Heart left ventricle (tissue), 16 donors: ENCODE measurements at regions of chr18 and their contacts with region 1.

Region 1: GRCh38 chr18:55322178-55322735 is 265.7 kb downstream of the TCF4 start:
- DNase-seq: peak; percentile 87 to 94 (median 89)
- ATAC-seq: peak; percentile 76 to 90 (median 87)
- H3K4me3 ChIP-seq: peak overlapping the region; percentile 49 to 79 (median 66)
- H3K27ac ChIP-seq: peak overlapping the region; percentile 83 to 99 (median 94)
- H3K4me1 ChIP-seq: peaks cover 0 to 44% (median 31%) of the 10 kb centered on the region in 12 donors
- H3K27me3 ChIP-seq: no peaks in the 10 kb centered on the region
- CTCF ChIP-seq: peak in 7 of 12 donors; percentile 12 to 48 (median 33)
- POLR2A ChIP-seq: peak in 1 of 2 donors; percentile 75

Region 2: GRCh38 chr18:55243857-55244256 is 78.4 kb before region 1 on chr18:
- intact Hi-C with region 1: loop called in 6 of 10 experiments (anchors 5 kb)
- DNase-seq: peak in 4 of 5 donors; percentile 72 to 83 (median 78)
- ATAC-seq: peak; percentile 76 to 89 (median 86)
- H3K4me3 ChIP-seq: no peak overlapping the region
- H3K27ac ChIP-seq: peak overlapping the region; percentile 49 to 84 (median 77)
- H3K4me1 ChIP-seq: peaks cover 12 to 98% (median 74%) of the 10 kb centered on the region in 12 donors
- H3K27me3 ChIP-seq: no peaks in the 10 kb centered on the region
- CTCF ChIP-seq: no peak
- POLR2A ChIP-seq: no peak

Region 3: GRCh38 chr18:55265984-55266383 is 56.3 kb before region 1 on chr18:
- intact Hi-C with region 1: loop called in 1 of 10 experiments (anchors 10 kb)
- DNase-seq: no peak
- ATAC-seq: no peak
- H3K4me3 ChIP-seq: no peak overlapping the region
- H3K27ac ChIP-seq: peak overlapping the region in 7 of 12 donors; percentile 1 to 51 (median 12)
- H3K4me1 ChIP-seq: peaks cover 8 to 82% (median 59%) of the 10 kb centered on the region in 12 donors
- H3K27me3 ChIP-seq: no peaks in the 10 kb centered on the region
- CTCF ChIP-seq: no peak
- POLR2A ChIP-seq: no peak

Region 4: GRCh38 chr18:55405893-55406406 is 83.7 kb after region 1 on chr18:
- intact Hi-C with region 1: loop called in 1 of 10 experiments (anchors 5 kb)
- DNase-seq: peak; percentile 87 to 93 (median 92)
- ATAC-seq: peak; percentile 83 to 91 (median 88)
- H3K4me3 ChIP-seq: peak overlapping the region in 1 of 12 donors; percentile 3
- H3K27ac ChIP-seq: peak overlapping the region; percentile 50 to 86 (median 80)
- H3K4me1 ChIP-seq: peaks cover 0 to 55% (median 20%) of the 10 kb centered on the region in 12 donors
- H3K27me3 ChIP-seq: no peaks in the 10 kb centered on the region
- CTCF ChIP-seq: peak in 5 of 12 donors; percentile 5 to 35 (median 22)
- POLR2A ChIP-seq: no peak

Region 5: DNA sequence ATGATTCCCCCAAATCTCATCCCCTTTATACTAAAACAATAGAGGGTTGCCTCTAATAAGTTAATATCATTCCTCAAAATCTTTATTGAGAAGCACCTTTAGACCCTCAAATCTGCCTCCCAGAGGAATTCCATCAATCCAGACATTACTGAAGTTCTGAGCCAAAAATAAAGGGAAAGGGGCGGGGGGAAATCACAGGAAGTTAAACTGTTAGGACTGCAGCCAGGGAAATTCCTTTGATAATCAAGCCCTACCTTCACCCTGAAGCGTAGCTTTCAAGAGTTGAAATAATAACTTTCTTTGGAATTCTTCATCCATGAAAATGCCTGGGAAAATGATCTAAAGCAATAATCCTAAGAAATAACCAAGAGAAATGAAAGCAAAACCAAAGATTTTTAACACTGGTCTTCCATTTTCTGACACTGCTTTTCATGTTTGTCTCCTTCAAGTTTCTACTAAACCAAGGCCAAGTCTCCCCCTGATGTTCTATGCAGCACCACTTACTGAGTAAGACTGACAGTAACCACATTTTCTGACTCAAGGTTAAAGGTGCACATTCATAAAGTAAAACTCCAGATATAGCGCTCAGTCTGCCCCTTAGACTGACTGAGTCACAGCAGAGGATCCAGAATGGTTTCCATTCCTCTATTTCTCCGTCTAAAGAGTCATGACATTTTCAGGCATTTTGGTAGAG is 187.5 kb after region 1 on chr18:
- intact Hi-C with region 1: loop called in 1 of 10 experiments (anchors 10 kb)
- DNase-seq: peak in 2 of 5 donors; percentile 40 to 63
- ATAC-seq: peak in 2 of 4 donors; percentile 45 to 64
- H3K4me3 ChIP-seq: peak overlapping the region in 11 of 12 donors; percentile 1 to 50 (median 34)
- H3K27ac ChIP-seq: peak overlapping the region; percentile 52 to 94 (median 86)
- H3K4me1 ChIP-seq: peaks cover 0 to 55% (median 18%) of the 10 kb centered on the region in 12 donors
- H3K27me3 ChIP-seq: no peaks in the 10 kb centered on the region
- CTCF ChIP-seq: no peak
- POLR2A ChIP-seq: no peak